ENCODE measurements at regions of chr12 and their contacts with region 1.

Region 1: DNA sequence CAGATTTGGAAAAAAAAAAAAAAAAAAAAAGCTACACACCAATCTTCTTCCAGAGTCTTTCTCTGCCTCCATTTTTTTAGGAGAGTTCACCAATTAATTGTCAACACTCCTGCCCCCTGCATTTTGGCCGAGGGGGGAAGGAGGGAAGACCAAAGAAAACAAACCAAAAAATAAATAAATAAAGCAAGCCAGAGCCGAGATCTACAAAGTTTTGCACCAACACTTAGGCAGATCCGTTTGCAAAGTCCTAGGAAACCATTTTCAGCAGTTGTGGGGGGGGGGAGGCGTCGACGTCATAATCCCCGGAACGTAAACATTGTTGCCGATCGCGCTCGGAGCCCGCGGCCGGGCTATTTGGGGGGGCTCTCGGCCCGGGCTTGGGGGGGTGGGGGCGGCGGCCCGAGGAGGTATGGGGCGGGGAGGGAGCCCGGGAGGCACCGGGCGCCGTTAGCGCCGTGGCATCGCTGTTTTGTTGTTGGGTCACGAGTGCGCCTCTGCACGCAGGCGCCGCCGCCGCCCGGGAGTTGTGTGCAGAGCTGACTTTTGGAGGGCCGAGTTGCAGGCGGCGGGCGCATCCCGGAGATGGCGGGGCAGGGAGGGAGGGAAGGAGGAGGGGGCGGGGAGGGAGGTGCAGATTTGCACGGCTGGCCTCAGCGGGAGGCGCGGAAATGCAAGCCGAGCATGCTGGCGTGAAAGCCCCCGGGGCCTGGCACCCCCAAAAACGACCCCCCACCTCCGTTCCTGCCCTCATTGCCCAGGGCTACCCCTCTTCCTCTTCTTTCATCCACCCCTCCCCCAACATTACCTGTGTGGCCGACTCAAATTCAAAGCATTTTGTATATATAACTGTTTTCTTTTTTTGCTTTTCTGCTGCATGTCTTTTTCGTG is 598 bp downstream of the KDM2B start:
- DNase-seq: peak; percentile 69 to 87 (median 77)
- ATAC-seq: peak; percentile 28 to 77 (median 69)
- H3K4me3 ChIP-seq: peak overlapping the region; percentile 61 to 81 (median 74)
- H3K27ac ChIP-seq: peak overlapping the region; percentile 17 to 91 (median 84)
- H3K4me1 ChIP-seq: peaks cover 0 to 58% (median 31%) of the 10 kb centered on the region in 12 donors
- H3K27me3 ChIP-seq: no peaks in the 10 kb centered on the region
- CTCF ChIP-seq: no peak
- POLR2A ChIP-seq: no peak

Region 2: DNA sequence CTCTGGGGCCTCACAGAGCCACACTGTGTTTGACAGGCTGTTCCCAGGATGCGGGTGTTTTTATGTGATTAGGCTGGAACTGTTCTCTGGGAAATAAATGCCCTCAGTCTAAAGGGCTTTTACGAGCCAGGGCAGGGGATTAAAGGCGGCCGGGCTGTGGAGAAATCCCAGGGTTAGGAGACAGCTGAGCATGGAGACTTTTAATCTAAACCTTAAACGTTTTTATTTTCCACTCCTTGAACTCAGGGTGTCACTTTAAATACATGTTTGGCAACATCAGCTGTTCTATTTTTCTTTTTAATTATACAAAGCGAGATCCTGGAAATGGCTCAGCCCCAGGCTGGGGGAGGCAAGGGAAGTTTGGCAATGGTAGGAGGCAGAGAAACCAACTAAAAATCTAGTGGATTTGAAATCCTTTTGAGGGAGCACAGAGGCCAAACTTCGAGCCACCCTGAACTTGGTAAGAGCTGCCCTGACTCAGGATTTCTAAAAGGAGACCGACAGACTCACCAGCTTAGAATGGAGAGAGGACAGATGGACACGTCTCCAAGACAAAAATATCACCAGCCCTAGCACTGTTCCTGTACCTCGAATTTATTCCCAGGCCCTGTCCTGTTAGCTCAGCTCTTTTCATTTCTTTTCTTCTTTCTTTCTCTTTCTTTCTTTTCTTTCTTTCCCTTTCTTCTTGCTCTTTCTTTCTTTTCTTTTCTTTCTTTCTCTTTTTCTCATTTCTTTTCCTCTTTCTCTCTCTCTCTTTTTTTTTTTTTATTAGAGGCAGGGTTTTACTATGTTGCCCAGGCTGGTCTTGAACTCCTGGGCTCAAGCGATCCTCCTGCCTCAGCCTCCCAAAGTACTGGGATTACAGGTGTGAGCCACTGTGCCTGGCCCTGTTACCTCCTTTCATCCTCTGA is 30.3 kb after region 1 on chr12:
- intact Hi-C with region 1: loop called in 1 of 10 experiments (anchors 5 kb)
- DNase-seq: no peak
- ATAC-seq: peak in 3 of 4 donors; percentile 68 to 79 (median 77)
- H3K4me3 ChIP-seq: no peak overlapping the region
- H3K27ac ChIP-seq: peak overlapping the region in 11 of 12 donors; percentile 19 to 83 (median 43)
- H3K4me1 ChIP-seq: peaks cover 0 to 14% (median 10%) of the 10 kb centered on the region in 12 donors
- H3K27me3 ChIP-seq: no peaks in the 10 kb centered on the region
- CTCF ChIP-seq: no peak
- POLR2A ChIP-seq: no peak

Region 3: DNA sequence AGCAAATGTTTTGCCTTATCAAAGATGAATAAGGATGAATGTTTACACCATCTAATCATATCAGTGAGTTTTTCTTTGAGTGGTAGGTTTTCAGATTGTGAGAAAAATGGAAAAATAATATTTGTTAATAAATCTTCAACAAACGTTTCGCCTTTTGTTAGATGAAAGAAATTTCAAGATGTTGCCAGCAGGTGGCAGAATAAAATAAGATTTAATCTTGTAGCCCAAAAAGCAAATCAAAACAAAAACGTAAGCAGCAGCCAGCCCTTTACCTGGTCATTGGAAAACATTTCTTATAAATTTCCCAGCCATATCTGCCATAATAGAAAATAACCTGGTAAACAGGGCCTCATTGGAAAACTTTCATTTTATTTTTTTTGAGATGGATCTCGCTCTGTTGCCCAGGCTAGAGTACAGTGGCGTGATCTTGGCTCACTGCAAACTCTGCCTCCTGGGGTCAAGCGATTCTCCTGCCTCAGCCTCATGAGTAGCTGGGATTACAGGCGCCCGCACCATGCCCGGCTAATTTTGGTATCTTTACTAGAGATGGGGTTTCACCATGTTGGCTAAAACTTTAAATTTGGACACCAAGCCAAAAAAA is 117.0 kb after region 1 on chr12:
- intact Hi-C with region 1: no loop called
- DNase-seq: no peak
- ATAC-seq: no peak
- H3K4me3 ChIP-seq: no peak overlapping the region
- H3K27ac ChIP-seq: no peak overlapping the region
- H3K4me1 ChIP-seq: peaks cover 0 to 5% (median 0%) of the 10 kb centered on the region in 12 donors
- H3K27me3 ChIP-seq: no peaks in the 10 kb centered on the region
- CTCF ChIP-seq: peak; percentile 41 to 70 (median 60)
- POLR2A ChIP-seq: no peak